ENCODE measurements at regions of chr15 and their contacts with region 1.

Region 1: DNA sequence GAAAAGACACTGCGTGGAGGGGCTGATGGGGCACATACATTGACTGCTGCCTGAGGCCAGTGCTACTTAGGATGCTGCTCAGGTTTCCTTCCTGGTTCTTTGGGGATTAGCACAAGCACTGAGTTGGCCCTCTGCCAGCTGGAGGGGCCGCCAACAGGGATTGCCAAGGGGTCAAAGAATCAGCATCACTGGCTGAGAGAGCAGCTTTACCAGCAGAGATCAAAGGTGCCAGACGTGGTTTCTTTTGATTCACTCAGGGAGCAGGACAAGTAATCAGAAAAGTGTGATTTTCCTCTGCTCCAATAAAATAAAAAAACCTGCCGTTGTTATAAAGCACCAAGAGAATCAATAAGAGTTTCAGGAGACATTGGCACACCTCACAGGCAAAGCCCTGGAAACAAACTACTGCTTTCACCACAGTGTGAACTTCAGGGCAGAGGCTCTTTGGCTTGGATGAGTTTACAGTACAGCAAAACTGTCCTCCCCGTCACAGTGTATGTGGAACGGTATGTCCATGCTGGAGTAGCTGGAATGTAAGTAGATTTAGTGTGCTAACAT is 45.8 kb upstream of the FSIP1 start:
- DNase-seq: peak; percentile 41
- H3K4me3 ChIP-seq: no peak overlapping the region
- H3K27ac ChIP-seq: no peak overlapping the region
- H3K4me1 ChIP-seq: peaks cover 7% of the 10 kb centered on the region
- H3K27me3 ChIP-seq: no peaks in the 10 kb centered on the region
- CTCF ChIP-seq: no peak

Region 2: DNA sequence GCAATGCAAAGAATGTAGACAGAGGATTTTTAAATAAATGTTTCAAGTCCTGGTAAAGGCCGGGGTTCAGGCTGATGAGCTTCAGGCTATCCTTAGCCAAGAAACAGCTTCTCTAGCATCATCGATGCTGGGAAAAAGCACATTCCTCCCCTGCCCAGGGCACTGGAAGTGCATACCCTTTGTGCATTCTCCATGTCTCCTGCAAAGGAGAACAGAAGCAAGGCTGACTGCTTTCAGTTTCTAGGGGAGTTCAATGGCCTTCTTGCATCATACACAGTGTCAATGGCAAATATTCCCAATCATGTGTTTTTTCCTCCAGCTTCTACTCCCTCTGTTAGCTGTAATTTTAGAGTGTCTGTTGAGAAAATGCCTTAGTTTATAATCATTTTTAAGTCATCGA is 31.7 kb after region 1 on chr15:
- CTCF ChIA-PET with region 1: no interaction called
- POLR2A ChIA-PET with region 1: interaction called, 12 read pairs
- intact Hi-C with region 1: no loop called
- DNase-seq: no peak
- H3K4me3 ChIP-seq: no peak overlapping the region
- H3K27ac ChIP-seq: no peak overlapping the region
- H3K4me1 ChIP-seq: no peaks in the 10 kb centered on the region
- H3K27me3 ChIP-seq: no peaks in the 10 kb centered on the region
- CTCF ChIP-seq: no peak

Region 3: DNA sequence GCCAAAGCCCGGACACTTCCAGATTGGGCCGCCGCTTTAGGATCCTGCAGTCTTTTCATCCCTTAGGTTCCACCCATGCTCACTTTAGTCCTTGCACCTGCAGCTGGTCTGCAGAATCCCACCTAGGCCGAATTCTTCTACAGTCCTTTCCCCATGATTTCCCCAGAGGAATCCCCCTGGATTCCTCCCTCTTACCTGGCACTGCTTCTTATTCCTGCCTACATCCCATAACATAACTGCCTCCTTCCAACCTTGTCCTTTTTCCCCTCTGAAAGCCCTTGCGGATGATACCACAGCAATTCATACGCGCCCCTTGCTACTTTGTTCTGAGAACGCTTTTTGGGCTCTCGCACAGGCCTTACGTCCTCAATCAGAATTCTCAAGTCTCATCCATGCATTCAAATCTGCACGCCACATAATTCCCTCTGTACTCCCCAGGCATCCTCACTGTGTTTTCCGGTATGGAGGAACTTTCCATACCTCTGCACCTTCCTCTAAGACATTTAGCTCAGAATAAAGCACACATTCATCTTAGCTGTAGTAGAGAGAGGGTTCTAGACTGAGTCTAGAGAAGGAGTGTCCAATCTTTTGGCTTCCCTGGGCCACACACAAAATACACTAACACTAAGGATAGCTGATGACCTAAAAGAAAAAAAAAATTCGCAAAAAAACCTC is 106.1 kb after region 1 on chr15:
- CTCF ChIA-PET with region 1: no interaction called
- POLR2A ChIA-PET with region 1: no interaction called
- intact Hi-C with region 1: no loop called
- DNase-seq: peak; percentile 31
- H3K4me3 ChIP-seq: peak overlapping the region; percentile 78
- H3K27ac ChIP-seq: peak overlapping the region; percentile 83
- H3K4me1 ChIP-seq: peaks cover 6% of the 10 kb centered on the region
- H3K27me3 ChIP-seq: no peaks in the 10 kb centered on the region
- CTCF ChIP-seq: no peak

Region 4: DNA sequence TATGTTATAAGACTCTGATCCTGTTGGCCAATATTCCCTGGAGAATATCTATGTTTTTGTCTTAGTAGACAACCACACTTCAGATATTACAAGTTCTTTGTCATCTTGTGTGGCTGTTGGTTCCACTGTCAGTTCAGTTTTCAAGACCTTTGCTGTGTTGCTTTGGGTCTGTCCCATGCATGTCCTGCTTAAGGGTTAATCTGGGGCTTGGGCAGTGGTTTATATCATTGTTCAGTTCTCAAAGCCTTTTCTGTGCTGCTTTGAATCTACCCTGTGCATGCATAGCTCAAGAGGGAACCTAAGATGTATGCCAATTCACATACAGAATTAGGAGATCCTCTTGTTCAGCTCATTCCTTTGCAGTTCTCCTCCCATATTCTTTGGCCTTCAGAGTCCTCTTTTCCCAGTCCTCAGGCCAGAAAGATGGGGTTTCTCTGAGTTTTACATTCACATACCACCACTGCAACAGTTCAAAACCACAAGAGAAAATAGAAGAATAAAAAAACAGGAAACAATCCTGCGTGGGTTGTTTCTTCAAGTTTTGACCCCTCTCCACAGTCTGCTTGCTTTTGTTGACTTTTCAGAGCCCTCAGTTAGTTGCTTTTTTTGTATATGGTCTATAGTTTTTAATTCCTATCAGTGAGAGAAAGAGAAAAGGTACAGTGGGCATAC is 354.0 kb after region 1 on chr15:
- CTCF ChIA-PET with region 1: interaction called, 13 read pairs
- POLR2A ChIA-PET with region 1: no interaction called
- intact Hi-C with region 1: no loop called
- DNase-seq: no peak
- H3K4me3 ChIP-seq: no peak overlapping the region
- H3K27ac ChIP-seq: peak overlapping the region; percentile 52
- H3K4me1 ChIP-seq: no peaks in the 10 kb centered on the region
- H3K27me3 ChIP-seq: no peaks in the 10 kb centered on the region
- CTCF ChIP-seq: no peak

Measured in A673 (cell line).